ENCODE measurements at regions of chr12 and their contacts with region 1.

Region 1: GRCh38 chr12:122946690-122947341 is 19.4 kb downstream of the ABCB9 start:
- DNase-seq: peak; percentile 85
- ATAC-seq: peak; percentile 75
- H3K4me3 ChIP-seq: no peak overlapping the region
- H3K27ac ChIP-seq: peak overlapping the region; percentile 7
- H3K4me1 ChIP-seq: peaks cover 34% of the 10 kb centered on the region
- H3K27me3 ChIP-seq: no peaks in the 10 kb centered on the region
- CTCF ChIP-seq: peak; percentile 38
- EP300 ChIP-seq: no peak; a peak in 1 of 4 replicates
- POLR2A ChIP-seq: no peak
- RAD21 ChIP-seq: no peak

Region 2: DNA sequence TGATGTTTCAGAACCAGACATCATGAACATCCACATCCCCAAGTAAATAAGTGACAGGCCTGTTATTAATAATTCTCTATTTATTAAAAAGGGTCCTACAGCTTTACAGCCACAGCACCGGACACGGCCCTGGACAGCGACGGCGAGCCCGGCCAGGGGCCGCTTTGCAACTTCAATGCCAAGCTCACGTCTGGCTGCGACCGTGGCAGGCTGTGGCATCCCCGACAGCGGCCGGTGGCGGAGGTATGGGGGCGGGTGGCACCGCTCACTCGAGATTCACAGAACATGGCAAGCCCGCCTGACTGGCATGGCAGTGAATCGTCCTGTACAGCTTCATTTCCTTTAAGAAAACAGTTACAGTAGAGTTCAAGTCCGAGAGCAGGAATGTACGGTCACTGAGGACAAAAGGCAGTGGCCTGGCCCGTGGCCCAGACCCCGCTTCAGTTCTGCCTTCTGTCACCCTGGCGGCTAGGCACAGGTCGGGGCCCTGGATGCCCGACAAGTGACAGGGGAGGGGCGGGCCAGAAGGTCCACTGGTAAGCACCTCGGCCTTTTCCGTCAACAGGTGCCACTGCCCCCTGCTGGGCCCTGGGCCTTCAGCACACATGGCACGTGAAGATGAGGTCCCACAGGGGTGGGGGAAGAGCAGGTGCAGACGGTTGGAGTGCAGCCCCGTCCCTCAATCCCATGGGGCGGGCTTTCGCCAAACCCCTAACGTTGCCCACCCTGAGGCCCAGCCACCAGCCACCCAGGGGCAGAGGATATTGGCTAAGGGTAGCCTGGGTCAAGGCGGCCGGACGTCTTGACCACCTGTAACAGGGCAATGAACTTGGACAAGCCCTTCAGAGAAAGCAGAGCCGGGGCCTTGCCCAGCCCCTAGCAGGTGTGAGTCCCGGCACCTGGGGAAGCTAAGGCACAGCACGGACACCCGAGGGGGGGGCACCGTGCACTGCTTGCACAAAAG is 81.3 kb before region 1 on chr12:
- CTCF ChIA-PET with region 1: interaction called, 34 read pairs
- POLR2A ChIA-PET with region 1: interaction called, 3 read pairs
- in situ Hi-C with region 1: loop called (anchors 5 kb)
- intact Hi-C with region 1: loop called (anchors 1 kb)
- DNase-seq: peak; percentile 69
- ATAC-seq: peak; percentile 60
- H3K4me3 ChIP-seq: peak overlapping the region in 2 of 3 experiments; percentile 20 to 49; a peak in 3 of 6 replicates
- H3K27ac ChIP-seq: peak overlapping the region; percentile 82
- H3K4me1 ChIP-seq: peaks cover 72% of the 10 kb centered on the region
- H3K27me3 ChIP-seq: no peaks in the 10 kb centered on the region
- CTCF ChIP-seq: peak; percentile 88
- EP300 ChIP-seq: no peak; a peak in 1 of 4 replicates
- POLR2A ChIP-seq: 0 out of 4 replicates have a peak, but pooled peaks of 1 of the 2 experiments have one; percentile 24
- RAD21 ChIP-seq: peak; percentile 57

Region 3: DNA sequence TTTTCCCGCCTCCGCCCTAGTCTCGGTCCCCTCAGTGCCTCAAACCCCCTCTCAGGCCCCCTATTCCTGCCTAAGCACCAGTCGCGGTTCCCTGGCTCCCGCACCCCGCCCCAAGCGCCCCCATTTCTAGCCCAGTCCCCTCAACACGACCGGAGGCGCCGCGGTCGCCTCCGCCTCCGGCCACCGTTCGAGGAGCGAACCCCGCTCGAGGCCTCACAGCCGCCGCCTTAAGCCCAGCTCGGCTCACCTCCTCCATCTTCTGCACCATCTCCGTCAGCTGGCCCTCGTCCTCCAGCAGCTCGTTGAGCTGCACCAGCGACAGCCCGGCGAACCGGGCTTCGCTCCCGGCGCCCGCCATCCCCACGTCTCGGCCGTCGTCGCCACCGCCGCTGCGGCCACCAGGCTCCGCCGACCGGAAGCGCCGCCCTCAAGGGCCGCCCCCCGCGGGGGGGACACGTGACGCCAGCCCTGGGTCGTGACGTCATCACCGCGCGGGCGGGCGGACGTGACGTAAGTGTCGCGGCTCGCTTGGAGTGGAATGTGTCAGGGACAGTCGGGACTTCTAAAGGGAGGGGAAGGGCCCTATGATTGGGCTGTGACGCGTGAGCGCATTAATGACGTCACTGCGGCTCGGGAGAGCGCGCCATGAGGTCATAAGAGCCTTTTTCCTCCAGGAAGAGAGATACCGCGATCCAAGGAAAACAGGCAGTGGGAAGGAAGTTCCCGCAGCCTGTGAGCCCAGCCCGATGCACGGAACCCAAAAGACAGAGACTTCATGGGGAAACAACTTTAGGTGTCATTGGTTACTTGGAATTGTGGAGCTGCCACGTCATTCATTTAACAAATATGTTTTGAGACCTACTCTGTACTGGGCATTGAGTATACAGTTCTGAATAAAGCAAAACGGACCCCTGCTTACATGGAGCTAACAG is 50.8 kb before region 1 on chr12 and contains the start of gene VPS37B:
- CTCF ChIA-PET with region 1: no interaction called
- POLR2A ChIA-PET with region 1: interaction called, 21 read pairs
- in situ Hi-C with region 1: no loop called
- intact Hi-C with region 1: loop called (anchors 1 kb)
- DNase-seq: peak; percentile 33
- ATAC-seq: peak; percentile 14
- H3K4me3 ChIP-seq: peak within 1 kb of the TSS; percentile 58 to 79 (median 76)
- H3K27ac ChIP-seq: peak within 1 kb of the TSS; percentile 69
- H3K4me1 ChIP-seq: peaks cover 71% of the 10 kb centered on the region
- H3K27me3 ChIP-seq: no peaks in the 10 kb centered on the region; a peak in 1 of 5 replicates
- CTCF ChIP-seq: no peak
- EP300 ChIP-seq: no peak
- POLR2A ChIP-seq: peak; percentile 41 to 72; a peak in 3 of 4 replicates
- RAD21 ChIP-seq: peak; percentile 18; the same call in 1 of the 2 replicates
- total RNA-seq, gene VPS37B: 5.3 TPM in 2 replicates

Region 4: DNA sequence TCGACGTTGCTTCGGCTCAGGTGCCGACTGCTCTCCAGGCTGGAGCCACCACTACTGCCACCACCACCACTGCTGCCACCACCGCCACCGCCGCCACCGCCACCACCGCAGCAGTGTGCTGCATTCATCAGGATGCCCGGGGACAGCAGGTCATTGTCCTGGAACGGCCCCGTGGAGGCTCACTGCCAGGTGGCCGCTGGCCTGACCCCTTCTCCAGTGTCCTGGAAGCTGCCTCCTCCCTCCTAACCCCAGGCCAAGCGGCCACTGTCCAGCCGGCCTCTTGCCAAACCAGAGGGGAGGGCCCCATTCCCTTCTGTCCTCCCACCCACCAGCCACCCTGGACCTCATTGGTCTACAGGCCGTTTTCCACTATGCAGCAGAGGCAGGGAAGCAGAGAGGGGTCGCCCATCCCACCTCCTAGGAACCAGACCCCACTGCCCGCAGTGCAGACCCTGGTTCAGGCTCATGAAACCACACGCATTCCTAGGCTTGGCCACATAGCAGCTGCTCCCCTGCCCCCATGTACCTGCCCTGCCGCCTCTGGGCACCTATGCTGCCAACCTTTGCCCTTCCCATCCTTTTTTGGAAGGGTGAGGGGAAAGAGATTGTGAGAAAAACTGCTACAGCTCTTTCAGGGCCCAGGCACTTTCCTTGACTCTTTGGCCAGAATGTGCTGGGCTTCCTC is 48.8 kb after region 1 on chr12:
- CTCF ChIA-PET with region 1: no interaction called
- POLR2A ChIA-PET with region 1: no interaction called
- in situ Hi-C with region 1: no loop called
- intact Hi-C with region 1: no loop called
- DNase-seq: no peak
- ATAC-seq: no peak
- H3K4me3 ChIP-seq: no peak overlapping the region
- H3K27ac ChIP-seq: peak overlapping the region; percentile 44
- H3K4me1 ChIP-seq: peaks cover 12% of the 10 kb centered on the region
- H3K27me3 ChIP-seq: no peaks in the 10 kb centered on the region
- CTCF ChIP-seq: no peak
- EP300 ChIP-seq: no peak
- POLR2A ChIP-seq: no peak
- RAD21 ChIP-seq: no peak

Region 5: DNA sequence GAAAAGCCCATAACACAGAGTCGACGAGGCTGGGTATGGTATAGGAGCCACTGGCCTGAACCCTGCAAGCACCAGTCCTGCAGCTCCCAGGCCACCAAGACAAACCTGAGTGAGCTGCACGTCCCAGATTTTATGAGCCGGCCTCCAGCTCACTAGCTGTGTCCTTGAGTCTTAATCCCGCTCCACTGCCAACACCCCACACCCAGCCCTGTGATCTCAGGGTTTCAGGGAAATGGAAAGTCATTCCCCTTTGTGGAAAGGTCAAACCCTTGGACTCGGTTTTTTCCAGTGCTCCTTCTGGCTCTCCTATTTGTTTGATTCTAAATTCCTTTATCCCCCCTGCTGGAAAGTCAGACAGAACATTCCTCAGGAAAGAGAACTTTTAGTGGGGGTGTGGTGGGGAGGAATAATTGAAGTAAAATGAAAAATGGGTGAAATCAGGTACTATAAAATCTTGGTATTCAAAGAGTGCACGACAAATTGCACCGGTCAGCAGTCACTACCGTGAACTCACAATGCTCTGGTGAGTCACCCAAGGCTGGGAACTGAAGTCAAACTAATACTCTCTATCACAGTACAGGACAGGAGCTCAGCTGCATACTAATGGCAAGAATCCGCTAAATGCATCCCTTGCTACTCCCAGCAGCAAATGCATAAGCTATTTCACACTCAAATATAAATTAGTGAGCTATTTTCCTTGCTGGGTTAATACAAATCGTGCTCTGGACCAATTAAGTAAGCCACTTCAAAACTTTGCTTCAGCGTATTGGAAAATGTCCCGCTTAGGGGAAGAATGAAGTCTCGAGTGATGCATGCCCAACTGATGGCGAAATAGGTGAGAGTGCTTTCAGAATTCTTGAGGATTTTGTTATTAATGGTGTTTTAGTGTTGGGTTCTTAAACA is 195.1 kb after region 1 on chr12:
- CTCF ChIA-PET with region 1: no interaction called
- POLR2A ChIA-PET with region 1: no interaction called
- in situ Hi-C with region 1: no loop called
- intact Hi-C with region 1: no loop called
- DNase-seq: peak; percentile 87
- ATAC-seq: peak; percentile 75
- H3K4me3 ChIP-seq: peak overlapping the region; percentile 43 to 71 (median 46); a peak in 5 of 6 replicates
- H3K27ac ChIP-seq: peak overlapping the region; percentile 97
- H3K4me1 ChIP-seq: peaks cover 68% of the 10 kb centered on the region
- H3K27me3 ChIP-seq: no peaks in the 10 kb centered on the region
- CTCF ChIP-seq: no peak
- EP300 ChIP-seq: peak in 1 of 2 experiments; percentile 85; a peak in 2 of 4 replicates
- POLR2A ChIP-seq: peak; percentile 68 to 73
- RAD21 ChIP-seq: no peak

Measured in HepG2 (cell line).